AG04449 (cell line): ENCODE measurements at regions of chr10 and their contacts with region 1.

Region 1: DNA sequence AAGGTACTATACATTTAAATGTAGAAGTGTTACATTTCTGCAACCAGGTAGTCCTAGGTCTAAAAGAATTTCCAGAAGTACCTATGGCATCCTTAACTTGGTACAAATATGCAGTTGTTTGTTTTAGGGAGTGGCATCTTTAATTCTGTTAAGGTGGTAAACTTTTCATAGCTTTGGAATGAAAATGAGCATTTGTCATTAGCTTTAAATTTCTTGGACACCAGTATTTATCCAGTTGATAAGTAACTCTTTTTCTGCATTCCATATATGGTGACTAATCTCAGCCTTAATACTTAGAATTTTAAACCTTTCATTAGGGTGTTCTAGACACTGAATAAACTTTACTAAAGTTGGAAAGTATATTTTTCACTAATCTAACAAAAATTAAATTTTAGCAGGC is 10.8 kb downstream of the SLF2 start:
- DNase-seq: no peak
- H3K4me3 ChIP-seq: no peak overlapping the region
- CTCF ChIP-seq: no peak

Region 2: GRCh38 chr10:100817268-100817839 is 106.2 kb before region 1 on chr10:
- CTCF ChIA-PET with region 1: no interaction called
- POLR2A ChIA-PET with region 1: no interaction called
- DNase-seq: no peak
- H3K4me3 ChIP-seq: no peak overlapping the region
- CTCF ChIP-seq: no peak

Region 3: GRCh38 chr10:100827819-100828737 is 95.5 kb before region 1 on chr10:
- CTCF ChIA-PET with region 1: no interaction called
- POLR2A ChIA-PET with region 1: no interaction called
- DNase-seq: no peak
- H3K4me3 ChIP-seq: no peak overlapping the region
- CTCF ChIP-seq: no peak

Region 4: GRCh38 chr10:100934084-100934659 is 10.6 kb after region 1 on chr10:
- CTCF ChIA-PET with region 1: interaction called, 10 read pairs
- POLR2A ChIA-PET with region 1: interaction called, 3 read pairs
- DNase-seq: no peak
- H3K4me3 ChIP-seq: no peak overlapping the region
- CTCF ChIP-seq: peak; percentile 40